CD8-positive, alpha-beta memory T cell (primary cell): ENCODE measurements at regions of chr6 and their contacts with region 1.

Region 1: GRCh38 chr6:144335926-144336325 is 50.8 kb downstream of the UTRN start:
- DNase-seq: peak in 2 of 5 donors; percentile 32 to 57
- H3K4me3 ChIP-seq: peak overlapping the region; percentile 31
- H3K4me3 Mint-ChIP-seq: peak overlapping the region; percentile 66 to 88 (median 78)
- H3K27ac ChIP-seq: no peak overlapping the region
- H3K27ac Mint-ChIP-seq: peak overlapping the region; percentile 79 to 99 (median 97)
- H3K4me1 ChIP-seq: peaks cover 39% of the 10 kb centered on the region
- H3K4me1 Mint-ChIP-seq: peaks cover 60 to 86% (median 68%) of the 10 kb centered on the region in 3 donors
- H3K27me3 ChIP-seq: no peaks in the 10 kb centered on the region
- H3K27me3 Mint-ChIP-seq: no peaks in the 10 kb centered on the region

Region 2: GRCh38 chr6:144653885-144654505 is 318.1 kb after region 1 on chr6:
- CTCF ChIA-PET with region 1: no interaction called
- POLR2A ChIA-PET with region 1: interaction called, 11 read pairs
- DNase-seq: peak in 1 of 5 donors; percentile 0
- H3K4me3 ChIP-seq: no peak overlapping the region
- H3K4me3 Mint-ChIP-seq: peak overlapping the region; percentile 0 to 63 (median 29)
- H3K27ac ChIP-seq: no peak overlapping the region
- H3K27ac Mint-ChIP-seq: peak overlapping the region; percentile 1 to 82 (median 44)
- H3K4me1 ChIP-seq: peaks cover 20% of the 10 kb centered on the region
- H3K4me1 Mint-ChIP-seq: peaks cover 77 to 88% (median 87%) of the 10 kb centered on the region in 3 donors
- H3K27me3 ChIP-seq: no peaks in the 10 kb centered on the region
- H3K27me3 Mint-ChIP-seq: no peaks in the 10 kb centered on the region